Upper lobe of right lung (tissue), 1 donor: ENCODE measurements at regions of chr16 and their contacts with region 1.

Region 1: GRCh38 chr16:57648590-57649442 is 19.3 kb upstream of the ADGRG3 start:
- DNase-seq: peak; percentile 86
- ATAC-seq: peak; percentile 92
- H3K4me3 ChIP-seq: no peak overlapping the region
- H3K27ac ChIP-seq: peak overlapping the region; percentile 9
- H3K4me1 ChIP-seq: peaks cover 15% of the 10 kb centered on the region
- H3K27me3 ChIP-seq: peaks cover 4% of the 10 kb centered on the region
- CTCF ChIP-seq: peak; percentile 100

Region 2: DNA sequence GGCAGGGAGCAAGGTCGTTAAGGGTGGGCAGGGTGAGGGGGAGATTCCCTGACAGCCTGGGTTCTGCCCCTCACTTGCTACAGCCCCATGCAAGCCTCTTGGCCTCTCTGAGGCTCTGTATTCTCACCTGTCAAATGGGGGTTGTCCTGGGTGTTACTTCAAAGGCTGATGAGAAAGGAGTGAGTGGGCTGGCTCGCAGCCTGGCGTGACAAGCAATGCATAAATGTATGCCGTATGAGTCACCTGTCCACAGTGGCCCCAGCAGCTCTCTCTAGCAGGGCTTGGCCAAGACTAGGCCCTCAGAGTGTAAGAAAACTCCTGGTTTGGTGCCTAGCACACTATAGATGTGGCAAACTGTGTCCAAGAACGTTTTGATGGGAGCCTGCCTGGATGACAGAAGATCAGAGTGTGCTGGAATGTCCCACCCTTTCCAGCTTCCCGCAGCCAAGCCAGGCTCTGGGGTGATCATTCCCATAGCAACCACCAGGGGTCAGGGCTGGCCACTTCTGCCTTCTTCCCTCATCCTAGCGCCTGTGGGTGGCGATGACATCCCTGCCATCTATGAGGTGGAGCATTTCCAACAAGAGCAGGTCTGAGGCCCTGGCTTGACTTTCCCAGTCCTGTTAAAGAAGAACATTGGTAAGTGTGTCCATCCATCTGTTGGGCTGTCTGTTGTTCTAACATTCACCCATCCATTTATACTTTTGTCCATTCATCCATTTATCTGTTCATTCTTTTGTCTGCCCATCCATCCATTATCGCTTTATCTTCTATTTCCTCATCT is 57.5 kb before region 1 on chr16:
- intact Hi-C with region 1: loop called (anchors 5 kb)
- DNase-seq: peak; percentile 83
- ATAC-seq: peak; percentile 94
- H3K4me3 ChIP-seq: no peak overlapping the region
- H3K27ac ChIP-seq: peak overlapping the region; percentile 12
- H3K4me1 ChIP-seq: peaks cover 6% of the 10 kb centered on the region
- H3K27me3 ChIP-seq: no peaks in the 10 kb centered on the region
- CTCF ChIP-seq: peak; percentile 95

Region 3: DNA sequence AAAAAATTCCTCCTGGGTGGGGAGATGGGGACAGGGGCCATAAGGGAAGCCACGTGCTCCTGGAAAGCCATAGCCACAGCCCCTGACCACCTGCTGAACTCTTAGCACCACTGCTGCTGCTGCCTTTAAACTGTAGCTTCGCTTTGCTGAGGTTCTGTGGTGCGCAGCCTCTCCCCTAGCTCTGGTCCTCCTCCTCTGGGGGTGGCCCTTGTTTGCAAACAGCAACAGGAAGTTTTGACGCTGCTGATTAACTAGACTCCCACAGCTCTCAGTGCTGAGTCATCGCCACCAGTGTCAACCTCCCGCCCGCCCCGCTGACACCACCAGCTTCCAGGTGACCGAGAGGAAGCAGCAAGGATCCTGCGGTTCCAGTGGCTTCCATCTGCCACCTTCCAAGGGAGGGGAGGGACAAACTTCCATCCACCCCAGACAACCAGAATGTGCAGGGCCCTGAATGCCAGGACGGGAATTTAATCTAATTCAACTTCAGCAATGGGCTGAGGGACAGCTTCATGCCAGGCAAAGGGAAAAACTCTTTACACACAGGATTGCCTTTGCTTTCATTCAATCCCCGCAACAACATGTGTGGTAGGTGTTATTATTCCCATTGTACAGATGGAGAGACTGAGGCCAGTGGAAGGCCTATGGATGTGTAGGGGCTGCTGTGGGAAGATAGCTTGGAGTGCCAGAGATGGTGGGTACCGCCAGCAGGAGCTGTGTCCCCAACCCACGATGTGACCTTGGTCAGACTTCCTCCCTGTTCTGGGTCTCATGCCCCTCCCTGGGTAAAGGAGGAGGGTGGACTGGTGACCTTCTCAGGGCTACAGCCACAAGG is 161.6 kb after region 1 on chr16:
- intact Hi-C with region 1: no loop called
- DNase-seq: peak; percentile 90
- ATAC-seq: peak; percentile 92
- H3K4me3 ChIP-seq: no peak overlapping the region
- H3K27ac ChIP-seq: peak overlapping the region; percentile 71
- H3K4me1 ChIP-seq: peaks cover 41% of the 10 kb centered on the region
- H3K27me3 ChIP-seq: no peaks in the 10 kb centered on the region
- CTCF ChIP-seq: no peak